CD4-positive, alpha-beta T cell (primary cell): ENCODE measurements at regions of chr5 and their contacts with region 1.

Region 1: GRCh38 chr5:7745882-7746610 is 104.9 kb downstream of the CFAP90 start:
- DNase-seq: peak in 10 of 14 experiments; percentile 7 to 56 (median 20)
- ATAC-seq: no peak
- H3K4me3 ChIP-seq: no peak overlapping the region
- H3K4me3 Mint-ChIP-seq: no peak overlapping the region
- H3K27ac ChIP-seq: no peak overlapping the region
- H3K27ac Mint-ChIP-seq: no peak overlapping the region
- H3K4me1 ChIP-seq: no peaks in the 10 kb centered on the region
- H3K4me1 Mint-ChIP-seq: no peaks in the 10 kb centered on the region
- H3K27me3 ChIP-seq: no peaks in the 10 kb centered on the region
- H3K27me3 Mint-ChIP-seq: peaks cover 7% of the 10 kb centered on the region
- CTCF ChIP-seq: peak; percentile 56

Region 2: DNA sequence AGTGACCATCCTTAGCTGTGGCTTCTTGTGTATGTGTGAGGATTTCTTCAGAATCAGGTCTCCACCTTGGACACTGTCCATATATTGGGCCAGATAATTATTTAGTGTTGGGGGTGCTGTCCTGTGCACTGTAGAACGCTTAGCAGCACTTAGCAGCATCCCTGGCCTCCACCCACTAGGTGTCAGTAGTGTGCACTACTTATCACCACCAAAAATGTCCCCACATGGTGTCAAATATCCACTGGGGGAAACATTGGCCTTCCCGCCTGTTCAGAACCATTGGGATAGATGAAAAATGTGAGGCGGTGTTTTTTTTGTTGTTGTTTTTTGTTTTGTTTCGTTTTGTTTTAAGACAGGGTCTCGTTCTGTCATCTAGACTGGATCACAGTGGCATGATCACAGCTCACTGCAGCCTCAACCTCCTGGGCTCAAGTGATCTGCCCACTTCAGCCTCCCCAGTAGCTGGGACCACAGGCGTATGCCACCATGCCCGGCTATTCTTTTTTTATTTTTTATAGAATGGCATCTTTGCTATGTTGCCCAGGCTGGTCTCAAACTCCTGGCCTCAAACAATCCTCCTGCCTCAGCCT is 965.1 kb before region 1 on chr5:
- CTCF ChIA-PET with region 1: no interaction called
- POLR2A ChIA-PET with region 1: no interaction called
- intact Hi-C with region 1: loop called in 1 of 2 experiments (anchors 5 kb)
- DNase-seq: peak in 5 of 14 experiments; percentile 7 to 55 (median 28)
- ATAC-seq: peak; percentile 49
- H3K4me3 ChIP-seq: no peak overlapping the region
- H3K4me3 Mint-ChIP-seq: no peak overlapping the region
- H3K27ac ChIP-seq: no peak overlapping the region
- H3K27ac Mint-ChIP-seq: no peak overlapping the region
- H3K4me1 ChIP-seq: no peaks in the 10 kb centered on the region
- H3K4me1 Mint-ChIP-seq: no peaks in the 10 kb centered on the region
- H3K27me3 ChIP-seq: no peaks in the 10 kb centered on the region
- H3K27me3 Mint-ChIP-seq: no peaks in the 10 kb centered on the region
- CTCF ChIP-seq: peak; percentile 43

Region 3: GRCh38 chr5:7039074-7039473 is 707.0 kb before region 1 on chr5:
- CTCF ChIA-PET with region 1: no interaction called
- POLR2A ChIA-PET with region 1: no interaction called
- intact Hi-C with region 1: no loop called
- DNase-seq: no peak
- ATAC-seq: no peak
- H3K4me3 ChIP-seq: no peak overlapping the region
- H3K4me3 Mint-ChIP-seq: no peak overlapping the region
- H3K27ac ChIP-seq: no peak overlapping the region
- H3K27ac Mint-ChIP-seq: no peak overlapping the region
- H3K4me1 ChIP-seq: no peaks in the 10 kb centered on the region
- H3K4me1 Mint-ChIP-seq: no peaks in the 10 kb centered on the region
- H3K27me3 ChIP-seq: no peaks in the 10 kb centered on the region
- H3K27me3 Mint-ChIP-seq: peaks cover 9% of the 10 kb centered on the region
- CTCF ChIP-seq: no peak